ENCODE measurements at regions of chr1 and their contacts with region 1.

Region 1: GRCh38 chr1:230642263-230642959 is at the start of gene COG2:
- DNase-seq: peak; percentile 97
- ATAC-seq: peak; percentile 92
- H3K4me3 Mint-ChIP-seq: peak within 1 kb of the TSS; percentile 96
- H3K27ac Mint-ChIP-seq: peak within 1 kb of the TSS; percentile 88
- H3K4me1 Mint-ChIP-seq: peaks cover 48% of the 10 kb centered on the region
- H3K27me3 Mint-ChIP-seq: peaks cover 13% of the 10 kb centered on the region
- total RNA-seq, gene COG2: 28.1 to 32.0 TPM

Region 2: GRCh38 chr1:229507951-229508822 is 1134.2 kb before region 1 on chr1 and contains the start of gene NUP133:
- CTCF ChIA-PET with region 1: no interaction called
- POLR2A ChIA-PET with region 1: no interaction called
- intact Hi-C with region 1: loop called in 1 of 2 experiments (anchors 10 kb)
- DNase-seq: peak; percentile 100
- ATAC-seq: peak; percentile 95
- H3K4me3 Mint-ChIP-seq: peak within 1 kb of the TSS; percentile 95
- H3K27ac Mint-ChIP-seq: peak within 1 kb of the TSS; percentile 92
- H3K4me1 Mint-ChIP-seq: peaks cover 24% of the 10 kb centered on the region
- H3K27me3 Mint-ChIP-seq: no peaks in the 10 kb centered on the region
- total RNA-seq, gene NUP133: 53.5 to 57.5 TPM

Region 3: GRCh38 chr1:230426246-230427093 is 215.9 kb before region 1 on chr1 and contains the start of gene PGBD5:
- CTCF ChIA-PET with region 1: no interaction called
- POLR2A ChIA-PET with region 1: no interaction called
- intact Hi-C with region 1: loop called in 1 of 2 experiments (anchors 1 kb)
- DNase-seq: peak; percentile 82
- ATAC-seq: peak; percentile 89
- H3K4me3 Mint-ChIP-seq: peak within 1 kb of the TSS; percentile 60
- H3K27ac Mint-ChIP-seq: no peak within 1 kb of the TSS
- H3K4me1 Mint-ChIP-seq: peaks cover 7% of the 10 kb centered on the region
- H3K27me3 Mint-ChIP-seq: peaks cover 57% of the 10 kb centered on the region
- total RNA-seq, gene PGBD5: 0.11 TPM in 1 of 2 experiments, not detected in the other

Region 4: DNA sequence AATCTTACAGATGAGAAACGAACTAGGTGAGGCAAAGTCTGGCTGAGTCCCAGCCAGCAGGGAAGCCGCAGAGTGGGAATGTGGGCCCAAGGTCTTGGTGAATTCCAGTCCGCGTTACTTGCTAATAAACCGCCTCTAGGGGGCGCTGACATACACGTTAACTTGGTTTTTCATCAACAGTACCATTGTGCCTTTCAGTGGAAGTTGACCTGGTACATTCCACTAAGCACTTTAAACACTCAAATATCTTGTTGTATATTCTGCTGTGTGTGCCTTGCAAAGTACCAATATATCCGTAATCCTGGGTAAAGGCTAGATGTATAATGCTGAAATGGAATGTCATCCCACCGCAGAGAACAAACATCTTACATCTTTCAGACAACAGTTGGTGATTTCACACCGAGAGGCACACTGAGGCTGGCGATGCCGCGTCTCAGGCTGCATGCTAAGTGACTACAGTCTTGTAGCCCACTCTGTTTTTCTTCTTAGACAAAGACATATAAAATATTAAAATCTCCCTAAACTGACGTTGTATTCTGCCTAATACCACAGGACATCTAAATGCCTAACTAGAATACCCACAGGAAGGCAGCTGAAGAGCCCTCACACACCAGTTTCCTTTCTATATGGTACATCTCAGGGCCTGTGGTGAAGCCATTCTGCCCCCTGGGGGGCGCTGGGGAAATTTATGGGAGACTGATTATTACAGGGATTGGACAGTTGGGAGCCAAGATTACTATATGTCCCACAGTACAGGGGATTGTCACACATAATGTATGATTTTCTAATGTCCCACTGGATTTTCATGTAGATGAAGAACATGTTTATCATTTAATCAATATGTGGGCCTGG is 275.1 kb after region 1 on chr1:
- CTCF ChIA-PET with region 1: no interaction called
- POLR2A ChIA-PET with region 1: no interaction called
- intact Hi-C with region 1: loop called in 1 of 2 experiments (anchors 5 kb)
- DNase-seq: peak; percentile 85
- ATAC-seq: peak; percentile 80
- H3K4me3 Mint-ChIP-seq: no peak overlapping the region
- H3K27ac Mint-ChIP-seq: no peak overlapping the region
- H3K4me1 Mint-ChIP-seq: peaks cover 7% of the 10 kb centered on the region
- H3K27me3 Mint-ChIP-seq: no peaks in the 10 kb centered on the region

Region 5: DNA sequence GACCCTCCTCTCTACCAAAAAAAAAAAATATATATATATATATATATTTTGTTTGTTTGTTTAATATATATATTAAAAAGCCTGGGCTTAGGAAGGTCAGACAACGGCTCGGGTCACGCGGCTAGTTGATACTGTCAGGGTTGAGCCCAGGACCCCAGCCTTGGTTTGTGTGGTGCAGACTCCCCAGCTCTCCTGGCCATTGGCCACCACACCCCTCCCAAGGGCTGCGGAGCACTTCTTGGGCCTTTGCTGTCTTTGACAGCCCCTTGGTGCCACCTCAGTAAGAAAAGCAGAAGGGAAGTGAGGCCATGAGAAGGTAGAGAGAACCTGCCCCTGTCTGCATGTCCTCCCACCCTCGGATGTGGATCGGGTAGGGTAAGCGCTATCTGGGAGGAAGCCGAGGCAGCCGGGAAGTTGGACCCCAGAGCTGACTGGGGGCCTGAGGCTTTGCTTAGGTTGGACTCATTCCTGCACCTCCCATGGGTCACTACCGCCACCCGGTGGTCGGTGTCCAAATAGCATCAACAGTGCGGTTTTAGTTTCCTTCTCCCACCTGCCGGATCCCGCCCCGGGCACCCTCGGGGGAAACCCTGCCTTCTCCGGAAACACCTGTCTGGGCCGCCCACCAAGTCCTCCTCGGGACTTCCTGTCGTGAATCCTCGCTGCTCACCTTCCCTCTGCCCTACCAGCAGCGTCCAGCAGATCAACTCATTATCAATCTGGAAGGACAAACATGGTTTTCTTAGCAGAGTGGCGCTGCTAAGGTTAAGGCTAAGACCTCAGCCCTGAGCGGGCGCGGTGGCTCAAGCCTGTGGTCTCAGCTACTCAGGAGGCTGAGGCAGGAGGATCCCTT is 568.8 kb after region 1 on chr1:
- CTCF ChIA-PET with region 1: interaction called, 3 read pairs
- POLR2A ChIA-PET with region 1: no interaction called
- intact Hi-C with region 1: loop called (anchors 1 to 10 kb)
- DNase-seq: peak; percentile 96
- ATAC-seq: peak; percentile 97
- H3K4me3 Mint-ChIP-seq: peak overlapping the region; percentile 61
- H3K27ac Mint-ChIP-seq: peak overlapping the region; percentile 79
- H3K4me1 Mint-ChIP-seq: peaks cover 8% of the 10 kb centered on the region
- H3K27me3 Mint-ChIP-seq: no peaks in the 10 kb centered on the region

Region 6: DNA sequence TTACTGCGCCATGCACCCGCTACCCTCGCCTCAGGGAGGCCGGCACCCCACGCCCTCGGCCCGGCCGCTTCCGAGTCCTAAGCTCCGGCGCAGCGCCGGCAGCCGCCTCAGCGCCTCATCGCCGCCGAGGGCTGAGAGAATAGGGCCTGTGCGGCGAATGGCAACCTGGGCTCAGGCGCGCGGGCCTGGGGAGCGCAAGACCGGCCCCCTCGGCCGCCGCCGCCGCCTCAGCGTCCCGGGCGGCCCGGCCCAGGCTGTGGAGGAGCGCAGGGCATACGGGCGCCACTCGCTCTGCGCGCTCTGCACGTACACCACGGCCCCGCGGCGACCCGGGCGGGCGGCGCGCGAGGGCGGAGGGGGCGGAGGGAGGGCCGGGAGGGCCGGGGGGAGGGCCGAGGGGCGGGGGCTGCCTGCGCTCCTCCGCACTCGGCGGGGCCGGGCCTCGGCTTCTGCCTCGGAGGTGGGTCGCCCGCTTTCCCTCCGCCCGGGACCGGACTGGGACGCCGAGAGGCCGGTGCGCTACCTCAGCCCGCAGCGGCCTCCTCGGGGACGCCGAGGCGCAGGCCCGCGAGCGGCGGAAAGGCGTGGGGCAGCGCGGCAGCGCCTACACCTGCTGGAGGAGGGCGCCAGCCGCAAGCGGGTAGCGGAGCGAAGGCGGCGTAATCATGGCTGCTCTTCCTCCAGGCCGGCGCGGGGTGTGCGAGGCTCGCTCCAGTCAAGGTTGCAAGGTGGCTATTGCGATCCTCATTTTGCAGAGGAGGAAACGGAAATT is 779.8 kb after region 1 on chr1 and contains the start of gene EGLN1:
- CTCF ChIA-PET with region 1: interaction called, 3 read pairs
- POLR2A ChIA-PET with region 1: no interaction called
- intact Hi-C with region 1: loop called in 1 of 2 experiments (anchors 10 kb)
- DNase-seq: peak; percentile 92
- ATAC-seq: peak; percentile 83
- H3K4me3 Mint-ChIP-seq: peak within 1 kb of the TSS; percentile 86
- H3K27ac Mint-ChIP-seq: peak within 1 kb of the TSS; percentile 88
- H3K4me1 Mint-ChIP-seq: peaks cover 31% of the 10 kb centered on the region
- H3K27me3 Mint-ChIP-seq: no peaks in the 10 kb centered on the region
- total RNA-seq, gene EGLN1: 31.5 to 43.7 TPM

Measured in activated CD4-positive, alpha-beta T cell treated with anti-CD3 and anti-CD28 coated beads for 36 hours (primary cell).